ENCODE measurements at regions of chr7 and their contacts with region 1.

Region 1: DNA sequence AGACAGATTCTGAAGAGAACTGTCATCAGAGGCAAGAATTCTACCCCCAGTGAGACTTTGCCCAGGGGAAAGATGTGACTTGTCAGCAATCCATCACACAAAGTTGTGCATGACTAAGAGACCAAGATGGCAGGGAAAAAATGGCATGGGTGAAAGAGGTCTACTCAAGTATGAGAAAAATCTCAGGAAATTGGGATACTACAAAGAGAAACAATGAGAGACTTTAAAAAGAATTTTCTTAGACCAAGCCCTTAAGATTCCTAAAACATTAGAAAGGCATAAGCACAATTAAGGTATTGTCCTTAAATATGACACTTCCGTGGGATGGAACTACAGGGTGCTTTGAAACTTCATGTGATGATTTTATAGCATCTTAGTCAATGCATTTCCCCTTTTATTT is 45.6 kb upstream of the PDE1C start:
- DNase-seq: no peak
- ATAC-seq: no peak
- H3K4me3 ChIP-seq: no peak overlapping the region
- H3K27ac ChIP-seq: no peak overlapping the region
- H3K4me1 ChIP-seq: no peaks in the 10 kb centered on the region
- H3K27me3 ChIP-seq: no peaks in the 10 kb centered on the region
- CTCF ChIP-seq: no peak

Region 2: GRCh38 chr7:31918706-31919393 is 197.0 kb before region 1 on chr7:
- CTCF ChIA-PET with region 1: no interaction called
- POLR2A ChIA-PET with region 1: no interaction called
- in situ Hi-C with region 1: no loop called
- intact Hi-C with region 1: loop called (anchors 1 kb)
- DNase-seq: no peak
- ATAC-seq: no peak
- H3K4me3 ChIP-seq: no peak overlapping the region
- H3K27ac ChIP-seq: no peak overlapping the region
- H3K4me1 ChIP-seq: no peaks in the 10 kb centered on the region
- H3K27me3 ChIP-seq: no peaks in the 10 kb centered on the region
- CTCF ChIP-seq: no peak

Region 3: DNA sequence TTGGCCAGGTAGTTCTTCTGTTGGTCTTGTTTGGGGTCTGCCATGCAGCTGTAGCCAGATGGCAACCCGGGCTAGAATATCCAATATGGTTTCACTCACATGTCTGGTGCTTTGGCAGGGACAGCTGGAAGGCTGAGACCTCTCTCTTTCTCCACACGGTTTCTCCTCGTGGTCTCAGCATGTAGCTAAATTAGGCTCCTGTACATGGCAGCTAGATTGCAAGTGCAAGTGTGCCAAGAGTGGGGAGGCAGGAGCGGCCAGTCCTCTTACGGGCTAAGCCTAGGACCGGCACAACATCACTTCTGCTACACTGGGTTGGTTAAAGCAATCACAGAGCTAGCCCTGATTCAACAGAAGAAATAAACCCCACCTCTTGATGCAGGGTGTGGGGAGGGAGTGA is 36.3 kb before region 1 on chr7:
- CTCF ChIA-PET with region 1: no interaction called
- POLR2A ChIA-PET with region 1: no interaction called
- in situ Hi-C with region 1: no loop called
- intact Hi-C with region 1: no loop called
- DNase-seq: no peak
- ATAC-seq: no peak
- H3K4me3 ChIP-seq: no peak overlapping the region
- H3K27ac ChIP-seq: no peak overlapping the region
- H3K4me1 ChIP-seq: no peaks in the 10 kb centered on the region
- H3K27me3 ChIP-seq: no peaks in the 10 kb centered on the region
- CTCF ChIP-seq: no peak

Region 4: DNA sequence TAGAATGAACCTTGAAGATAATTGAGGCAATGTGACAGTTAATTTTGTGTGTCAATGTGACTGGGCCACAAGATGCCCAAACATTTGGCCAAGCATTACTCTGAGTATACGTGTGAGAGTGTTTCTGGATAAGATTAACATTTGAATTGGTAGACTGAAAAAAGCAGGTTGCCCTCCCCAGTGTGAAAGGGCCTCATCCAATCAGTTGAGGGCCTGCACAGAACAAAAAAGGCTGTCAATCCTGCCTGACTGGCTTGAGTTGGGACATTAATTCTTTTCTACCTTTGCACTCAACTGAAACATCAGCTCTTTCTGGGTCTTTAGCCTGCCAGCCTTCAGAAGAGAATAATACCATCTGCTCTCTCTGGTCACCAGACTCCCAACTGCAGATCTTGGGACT is 11.0 kb after region 1 on chr7:
- CTCF ChIA-PET with region 1: no interaction called
- POLR2A ChIA-PET with region 1: no interaction called
- in situ Hi-C with region 1: no loop called
- intact Hi-C with region 1: no loop called
- DNase-seq: no peak
- ATAC-seq: no peak
- H3K4me3 ChIP-seq: no peak overlapping the region
- H3K27ac ChIP-seq: no peak overlapping the region
- H3K4me1 ChIP-seq: no peaks in the 10 kb centered on the region
- H3K27me3 ChIP-seq: no peaks in the 10 kb centered on the region
- CTCF ChIP-seq: no peak

Measured in Panc1 (cell line).